Panc1 (cell line): ENCODE measurements at regions of chrX and their contacts with region 1.

Region 1: DNA sequence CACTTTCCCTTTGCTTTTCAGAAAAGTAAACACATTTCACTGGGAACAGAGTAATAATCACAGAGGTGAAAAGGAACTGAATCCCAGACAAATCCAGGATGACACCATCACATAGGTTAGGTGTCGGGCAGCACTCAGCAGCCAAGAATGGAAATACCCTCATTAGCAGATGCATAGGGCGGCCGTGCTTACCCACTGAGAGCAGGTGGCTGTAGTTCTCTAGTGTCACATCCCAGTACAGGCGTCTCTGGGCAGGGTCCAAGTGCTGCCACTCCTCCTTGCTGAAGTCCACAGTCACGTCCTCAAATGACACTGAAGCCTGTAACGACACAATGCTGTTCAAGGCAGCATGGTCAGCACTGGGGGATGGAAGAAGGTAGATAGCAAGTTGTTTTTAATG is 26.9 kb downstream of the ZNF41 start:
- DNase-seq: no peak
- ATAC-seq: no peak
- H3K4me3 ChIP-seq: no peak overlapping the region
- H3K27ac ChIP-seq: no peak overlapping the region
- H3K4me1 ChIP-seq: no peaks in the 10 kb centered on the region
- H3K27me3 ChIP-seq: no peaks in the 10 kb centered on the region
- CTCF ChIP-seq: no peak

Region 2: GRCh38 chrX:46029777-46030176 is 1426.3 kb before region 1 on chrX:
- CTCF ChIA-PET with region 1: no interaction called
- POLR2A ChIA-PET with region 1: no interaction called
- in situ Hi-C with region 1: no loop called
- intact Hi-C with region 1: no loop called
- DNase-seq: no peak
- ATAC-seq: no peak
- H3K4me3 ChIP-seq: no peak overlapping the region
- H3K27ac ChIP-seq: no peak overlapping the region
- H3K4me1 ChIP-seq: no peaks in the 10 kb centered on the region
- H3K27me3 ChIP-seq: no peaks in the 10 kb centered on the region
- CTCF ChIP-seq: no peak

Region 3: DNA sequence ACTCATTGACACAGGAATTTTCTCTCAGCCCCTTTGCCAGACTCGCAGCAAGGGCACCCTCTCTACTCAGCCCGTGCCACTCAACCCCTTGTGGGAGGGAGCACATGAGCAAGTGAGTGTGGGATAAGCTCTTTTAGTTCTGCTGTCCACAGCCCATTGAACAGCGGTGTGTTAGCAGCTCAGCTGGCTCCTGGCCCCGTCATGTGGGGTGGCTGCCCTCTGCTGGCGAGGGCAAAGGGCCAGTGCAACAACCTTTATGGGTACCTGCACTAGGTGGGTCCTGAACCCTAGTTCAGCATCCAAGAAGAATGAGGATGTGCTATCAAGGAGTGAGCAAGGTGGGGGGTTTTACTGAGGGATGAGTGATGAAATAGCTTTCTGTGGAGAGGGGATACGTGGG is 295.6 kb after region 1 on chrX:
- CTCF ChIA-PET with region 1: no interaction called
- POLR2A ChIA-PET with region 1: no interaction called
- in situ Hi-C with region 1: no loop called
- intact Hi-C with region 1: no loop called
- DNase-seq: no peak
- ATAC-seq: peak; percentile 90
- H3K4me3 ChIP-seq: no peak overlapping the region
- H3K27ac ChIP-seq: no peak overlapping the region
- H3K4me1 ChIP-seq: no peaks in the 10 kb centered on the region
- H3K27me3 ChIP-seq: no peaks in the 10 kb centered on the region
- CTCF ChIP-seq: peak; percentile 73

Region 4: GRCh38 chrX:48045410-48046331 is 589.6 kb after region 1 on chrX:
- CTCF ChIA-PET with region 1: no interaction called
- POLR2A ChIA-PET with region 1: interaction called, 12 read pairs
- in situ Hi-C with region 1: no loop called
- intact Hi-C with region 1: no loop called
- DNase-seq: no peak
- ATAC-seq: no peak
- H3K4me3 ChIP-seq: no peak overlapping the region
- H3K27ac ChIP-seq: no peak overlapping the region
- H3K4me1 ChIP-seq: no peaks in the 10 kb centered on the region
- H3K27me3 ChIP-seq: no peaks in the 10 kb centered on the region
- CTCF ChIP-seq: no peak